ENCODE measurements at regions of chr12 and their contacts with region 1.

Region 1: GRCh38 chr12:47812797-47813510 is 6.7 kb downstream of the HDAC7 start:
- DNase-seq: peak; percentile 96
- H3K4me3 Mint-ChIP-seq: peak overlapping the region; percentile 94
- H3K27ac Mint-ChIP-seq: peak overlapping the region; percentile 90
- H3K4me1 Mint-ChIP-seq: peaks cover 86% of the 10 kb centered on the region
- H3K27me3 Mint-ChIP-seq: no peaks in the 10 kb centered on the region

Region 2: GRCh38 chr12:47797441-47797840 is 15.5 kb before region 1 on chr12:
- CTCF ChIA-PET with region 1: interaction called, 47 read pairs
- DNase-seq: peak; percentile 50
- H3K4me3 Mint-ChIP-seq: no peak overlapping the region
- H3K27ac Mint-ChIP-seq: peak overlapping the region; percentile 90
- H3K4me1 Mint-ChIP-seq: peaks cover 46% of the 10 kb centered on the region
- H3K27me3 Mint-ChIP-seq: no peaks in the 10 kb centered on the region

Region 3: GRCh38 chr12:47858511-47859266 is 45.7 kb after region 1 on chr12:
- CTCF ChIA-PET with region 1: no interaction called
- DNase-seq: no peak
- H3K4me3 Mint-ChIP-seq: no peak overlapping the region
- H3K27ac Mint-ChIP-seq: no peak overlapping the region
- H3K4me1 Mint-ChIP-seq: peaks cover 18% of the 10 kb centered on the region
- H3K27me3 Mint-ChIP-seq: no peaks in the 10 kb centered on the region